ENCODE measurements at regions of chr9 and their contacts with region 1.

Region 1: DNA sequence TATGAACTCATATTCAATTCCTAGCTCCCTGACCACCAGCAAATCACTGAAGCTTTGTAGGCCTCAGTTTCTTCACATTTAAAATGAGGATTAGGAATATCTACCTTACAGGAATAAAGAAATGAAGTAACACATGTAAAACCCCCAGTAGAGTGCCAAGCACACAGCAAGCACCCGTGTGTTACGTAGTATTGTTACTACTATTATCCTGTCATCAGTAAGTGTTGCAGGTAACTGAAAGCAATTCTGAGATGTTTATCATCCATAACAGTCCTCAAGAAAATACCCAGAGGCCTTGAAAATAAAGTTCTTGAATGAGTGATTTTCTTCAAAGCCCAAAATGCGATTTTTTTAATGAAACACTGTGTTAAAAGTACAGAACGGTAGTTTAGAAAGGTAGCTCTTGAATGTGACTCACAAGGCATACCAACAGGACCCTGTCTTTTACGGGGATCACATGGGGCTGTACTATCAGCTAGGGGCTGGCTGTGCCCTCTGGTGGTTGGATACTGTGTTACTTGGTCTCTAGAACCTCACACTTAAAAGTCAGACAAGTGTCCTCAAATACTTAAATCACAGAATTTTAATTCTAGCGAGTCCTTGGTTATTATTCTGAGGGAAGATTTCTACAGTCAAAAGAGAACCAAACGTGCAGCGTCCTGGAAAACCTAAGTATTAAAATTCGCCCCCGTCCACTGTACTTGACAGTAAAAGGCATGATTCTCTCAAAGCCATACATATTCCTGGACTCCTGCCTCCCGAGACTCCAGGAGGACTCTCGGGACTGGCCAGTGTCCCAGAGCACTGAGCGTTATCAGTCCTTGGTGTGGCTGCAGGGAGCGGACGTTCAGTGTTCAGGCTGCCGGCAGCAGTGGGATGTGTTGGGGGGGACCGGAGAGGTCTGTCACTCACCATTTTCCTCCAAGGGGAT is 725 bp downstream of the NDUFB6 start:
- DNase-seq: peak; percentile 81
- H3K4me3 ChIP-seq: peak overlapping the region; percentile 92
- H3K27ac ChIP-seq: peak overlapping the region; percentile 79
- H3K4me1 ChIP-seq: peaks cover 15% of the 10 kb centered on the region
- H3K27me3 ChIP-seq: no peaks in the 10 kb centered on the region
- CTCF ChIP-seq: peak; percentile 73

Region 2: DNA sequence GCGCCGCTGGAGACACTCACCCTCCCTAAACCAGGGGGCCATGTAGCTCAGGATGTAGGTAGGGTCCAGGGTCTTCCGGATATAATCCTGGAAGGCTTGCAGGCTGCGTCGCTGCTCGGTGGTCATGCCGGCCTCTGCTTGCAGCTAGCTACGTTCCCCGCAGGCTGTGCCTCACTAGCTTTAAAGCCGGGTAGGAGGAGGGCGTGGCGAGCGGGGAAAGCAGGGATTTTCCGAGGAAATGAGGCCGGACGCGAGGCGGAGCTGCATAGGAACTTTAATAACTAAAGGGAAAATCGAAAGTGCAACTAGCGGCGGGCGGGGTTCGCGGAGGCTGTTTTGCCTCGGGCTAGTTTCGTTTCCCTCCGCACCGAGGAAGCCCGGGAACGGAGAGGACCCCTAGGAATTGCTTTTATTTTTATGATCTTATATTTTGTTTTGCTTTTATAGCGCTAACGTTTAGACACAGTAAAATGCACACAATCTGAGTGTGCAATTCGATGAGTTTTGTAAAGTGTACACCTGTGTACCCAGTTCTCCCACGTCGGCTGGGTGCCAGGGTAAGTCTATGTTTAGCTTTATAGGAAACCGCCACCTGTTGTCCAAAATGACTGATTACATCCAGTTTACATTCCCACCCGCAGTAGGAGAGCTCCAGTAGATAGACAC is 46.1 kb before region 1 on chr9 and contains the start of gene RIGI:
- CTCF ChIA-PET with region 1: interaction called, 5 read pairs
- POLR2A ChIA-PET with region 1: no interaction called
- intact Hi-C with region 1: loop called (anchors 10 kb)
- DNase-seq: peak; percentile 96
- H3K4me3 ChIP-seq: peak within 1 kb of the TSS; percentile 69
- H3K27ac ChIP-seq: peak within 1 kb of the TSS; percentile 73
- H3K4me1 ChIP-seq: peaks cover 13% of the 10 kb centered on the region
- H3K27me3 ChIP-seq: no peaks in the 10 kb centered on the region
- CTCF ChIP-seq: peak; percentile 70
- total RNA-seq, gene RIGI: 5.9 and 7.4 TPM in 2 replicates

Measured in A673 (cell line).